K562 (cell line): ENCODE measurements at regions of chr12 and their contacts with region 1.

Region 1: GRCh38 chr12:30806989-30807694 is 52.4 kb upstream of the CAPRIN2 start:
- DNase-seq: peak; percentile 30 to 77 (median 44)
- ATAC-seq: peak; percentile 98
- H3K4me3 ChIP-seq: peak overlapping the region; percentile 11; the same call in 1 of the 2 replicates
- H3K27ac ChIP-seq: no peak overlapping the region
- H3K4me1 ChIP-seq: peaks cover 0 to 3% of the 10 kb centered on the region in 2 experiments; a peak in 2 of 5 replicates
- H3K27me3 ChIP-seq: peaks cover 0 to 3% of the 10 kb centered on the region in 2 experiments; a peak in 1 of 5 replicates
- CTCF ChIP-seq: peak; percentile 51 to 84 (median 72)
- EP300 ChIP-seq: no peak
- POLR2A ChIP-seq: no peak
- RAD21 ChIP-seq: peak; percentile 94 to 95

Region 2: DNA sequence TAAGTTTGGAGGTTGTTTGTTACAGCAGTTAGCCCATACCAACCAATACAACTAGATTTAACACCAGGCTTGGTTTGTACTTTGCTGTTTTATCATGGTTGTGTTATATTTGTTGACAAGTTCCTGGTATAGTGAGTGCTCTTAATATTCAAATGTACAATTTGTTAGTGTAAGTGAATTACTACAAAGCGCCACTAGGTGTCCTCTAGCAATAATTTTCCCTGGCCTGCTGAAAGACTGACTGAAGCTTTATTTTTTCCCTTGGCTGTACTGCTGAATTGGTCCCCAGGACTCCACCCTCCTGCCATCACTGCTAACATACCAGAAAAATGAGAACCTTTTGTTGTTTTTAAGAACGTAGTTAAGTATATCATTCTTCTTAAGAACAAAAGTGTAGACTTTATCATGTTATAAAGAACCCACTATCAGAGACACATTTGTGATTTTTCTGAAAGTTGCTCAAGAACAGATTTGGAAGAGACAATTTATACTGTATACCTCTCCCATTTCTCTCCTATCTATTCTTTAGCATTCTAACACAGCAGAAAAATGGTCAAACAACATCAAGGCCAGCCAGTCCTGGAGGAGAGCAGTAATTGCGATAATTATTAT is 1733.4 kb before region 1 on chr12:
- CTCF ChIA-PET with region 1: no interaction called
- POLR2A ChIA-PET with region 1: no interaction called
- in situ Hi-C with region 1: no loop called
- intact Hi-C with region 1: loop called (anchors 10 kb)
- DNase-seq: peak; percentile 10 to 40 (median 30)
- ATAC-seq: peak; percentile 77
- H3K4me3 ChIP-seq: no peak overlapping the region
- H3K27ac ChIP-seq: no peak overlapping the region
- H3K4me1 ChIP-seq: no peaks in the 10 kb centered on the region
- H3K27me3 ChIP-seq: no peaks in the 10 kb centered on the region
- CTCF ChIP-seq: peak; percentile 38 to 68 (median 56); a peak in 5 of 6 replicates
- EP300 ChIP-seq: no peak
- POLR2A ChIP-seq: no peak
- RAD21 ChIP-seq: peak; percentile 71

Region 3: DNA sequence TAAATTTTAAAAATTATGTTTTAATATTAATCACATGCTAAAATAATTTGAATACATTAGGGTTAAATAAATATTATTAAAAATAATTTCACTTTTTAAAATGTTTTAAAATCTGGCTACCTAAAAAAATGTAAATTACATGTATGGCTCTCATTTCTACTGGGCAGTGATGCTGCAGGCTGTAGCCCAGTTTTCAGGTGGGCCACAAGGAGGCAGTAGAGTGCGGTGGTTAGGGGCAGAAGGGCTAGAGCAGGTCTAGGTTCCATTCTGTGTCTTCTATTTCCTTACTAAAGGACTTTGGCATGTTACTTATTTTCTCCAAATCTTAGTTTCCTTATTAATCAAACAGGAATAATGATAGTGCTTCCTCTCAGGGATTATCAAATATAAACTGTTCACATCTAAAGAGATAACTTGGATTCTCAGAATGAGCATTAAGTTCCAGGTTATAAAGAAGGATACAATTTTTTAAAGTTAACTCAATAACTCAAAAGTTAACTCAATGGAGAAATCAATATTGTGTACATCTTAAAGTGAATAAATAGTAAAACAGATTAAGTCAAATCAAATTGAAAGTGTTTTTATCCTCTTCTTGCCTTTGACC is 1254.7 kb before region 1 on chr12:
- CTCF ChIA-PET with region 1: interaction called, 3 read pairs
- POLR2A ChIA-PET with region 1: no interaction called
- in situ Hi-C with region 1: no loop called
- intact Hi-C with region 1: loop called (anchors 2 kb)
- DNase-seq: peak; percentile 47 to 70 (median 62)
- ATAC-seq: peak; percentile 92
- H3K4me3 ChIP-seq: no peak overlapping the region
- H3K27ac ChIP-seq: no peak overlapping the region
- H3K4me1 ChIP-seq: no peaks in the 10 kb centered on the region
- H3K27me3 ChIP-seq: no peaks in the 10 kb centered on the region
- CTCF ChIP-seq: peak; percentile 72 to 76 (median 74)
- EP300 ChIP-seq: no peak
- POLR2A ChIP-seq: no peak
- RAD21 ChIP-seq: peak; percentile 69 to 75

Region 4: GRCh38 chr12:30515351-30515750 is 291.8 kb before region 1 on chr12:
- CTCF ChIA-PET with region 1: no interaction called
- POLR2A ChIA-PET with region 1: no interaction called
- in situ Hi-C with region 1: no loop called
- intact Hi-C with region 1: loop called (anchors 5 kb)
- DNase-seq: no peak
- ATAC-seq: no peak
- H3K4me3 ChIP-seq: no peak overlapping the region
- H3K27ac ChIP-seq: no peak overlapping the region
- H3K4me1 ChIP-seq: no peaks in the 10 kb centered on the region
- H3K27me3 ChIP-seq: no peaks in the 10 kb centered on the region
- CTCF ChIP-seq: peak in 1 of 3 experiments; percentile 40; a peak in 1 of 6 replicates
- EP300 ChIP-seq: no peak
- POLR2A ChIP-seq: no peak
- RAD21 ChIP-seq: peak; percentile 28 to 50; a peak in 3 of 4 replicates

Region 5: GRCh38 chr12:30754709-30755394 is 52.3 kb before region 1 on chr12 and contains the start of gene CAPRIN2:
- CTCF ChIA-PET with region 1: no interaction called
- POLR2A ChIA-PET with region 1: no interaction called
- in situ Hi-C with region 1: no loop called
- intact Hi-C with region 1: loop called (anchors 2 kb)
- DNase-seq: peak; percentile 89 to 97 (median 90)
- ATAC-seq: peak; percentile 95
- H3K4me3 ChIP-seq: peak within 1 kb of the TSS; percentile 64
- H3K27ac ChIP-seq: peak within 1 kb of the TSS; percentile 71
- H3K4me1 ChIP-seq: peaks cover 16 to 34% of the 10 kb centered on the region in 2 experiments; a peak in 3 of 5 replicates
- H3K27me3 ChIP-seq: no peaks in the 10 kb centered on the region
- CTCF ChIP-seq: peak; percentile 37 to 82 (median 57); a peak in 5 of 6 replicates
- EP300 ChIP-seq: no peak
- POLR2A ChIP-seq: peak; percentile 63
- RAD21 ChIP-seq: peak; percentile 24 to 53; a peak in 2 of 4 replicates
- polyA plus RNA-seq, gene CAPRIN2: 2.3 to 3.4 TPM